ENCODE measurements at regions of chr16 and their contacts with region 1.

Region 1: DNA sequence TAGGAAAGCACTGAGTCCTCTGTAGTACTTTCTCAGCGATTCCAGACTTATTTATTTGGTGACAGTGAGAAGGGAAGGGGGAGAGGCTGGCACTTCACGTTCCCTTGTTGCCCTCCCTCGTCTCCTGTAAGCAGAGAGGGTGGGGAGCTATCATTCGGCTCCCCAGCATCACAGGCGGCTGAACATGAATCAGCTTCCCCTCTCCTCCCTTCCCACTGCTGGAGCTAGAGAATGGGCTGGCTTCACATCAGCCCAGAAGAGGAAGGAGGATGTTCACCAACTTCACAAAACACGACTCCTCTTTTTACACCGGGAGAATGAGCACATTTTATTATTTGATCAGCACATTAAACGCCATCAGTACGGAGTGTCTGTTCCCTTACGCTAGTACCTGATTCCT is 6.7 kb upstream of the CMIP start:
- DNase-seq: no peak
- ATAC-seq: no peak
- H3K4me3 Mint-ChIP-seq: no peak overlapping the region
- H3K27ac Mint-ChIP-seq: peak overlapping the region; percentile 23; the same call in 1 of the 2 replicates
- H3K4me1 Mint-ChIP-seq: peaks cover 7% of the 10 kb centered on the region
- H3K27me3 Mint-ChIP-seq: peaks cover 14% of the 10 kb centered on the region
- CTCF ChIP-seq: no peak

Region 2: GRCh38 chr16:81711657-81712319 is 273.9 kb after region 1 on chr16:
- CTCF ChIA-PET with region 1: interaction called, 3 read pairs
- POLR2A ChIA-PET with region 1: interaction called, 12 read pairs
- DNase-seq: peak; percentile 49
- ATAC-seq: peak; percentile 46
- H3K4me3 Mint-ChIP-seq: peak overlapping the region; percentile 40
- H3K27ac Mint-ChIP-seq: peak overlapping the region; percentile 68; the same call in 1 of the 2 replicates
- H3K4me1 Mint-ChIP-seq: peaks cover 62% of the 10 kb centered on the region
- H3K27me3 Mint-ChIP-seq: no peaks in the 10 kb centered on the region
- CTCF ChIP-seq: no peak